ENCODE measurements at regions of chr9 and their contacts with region 1.

Region 1: DNA sequence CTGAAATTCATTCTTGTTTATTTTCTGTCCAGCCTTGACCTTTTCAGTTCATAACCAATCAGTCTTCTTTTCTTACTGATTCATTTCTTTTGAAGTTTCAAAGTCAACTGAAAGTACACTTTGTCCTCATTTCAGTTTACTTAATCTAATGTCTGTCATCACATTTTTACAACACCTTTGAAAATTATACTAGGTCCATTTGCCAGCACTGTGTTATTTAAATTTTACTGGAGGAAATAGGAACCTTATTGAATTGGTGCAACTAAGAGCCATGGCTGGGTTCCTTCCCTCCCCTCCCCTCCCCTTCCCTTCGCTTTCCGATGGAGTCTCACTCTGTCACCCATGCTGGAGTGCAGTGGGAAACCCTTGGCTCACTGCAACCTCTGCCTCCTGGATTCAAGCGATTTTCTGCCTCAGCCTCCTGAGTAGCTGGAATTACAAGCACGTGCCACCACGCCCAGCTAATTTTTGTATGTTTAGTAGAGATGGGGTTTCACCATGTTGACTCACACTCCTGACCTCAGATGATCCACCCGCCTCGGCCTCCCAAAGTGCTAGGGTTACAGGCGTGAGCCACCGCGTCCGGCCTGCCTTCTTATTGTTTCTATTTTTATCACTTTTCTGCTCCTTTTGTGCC is 6.3 kb downstream of the RMI1 start:
- DNase-seq: no peak
- ATAC-seq: peak in 5 of 8 donors; percentile 27 to 72 (median 42)
- H3K4me3 ChIP-seq: no peak overlapping the region
- H3K27ac ChIP-seq: no peak overlapping the region
- H3K4me1 ChIP-seq: peaks cover 0 to 32% (median 5%) of the 10 kb centered on the region in 9 donors
- H3K27me3 ChIP-seq: no peaks in the 10 kb centered on the region
- CTCF ChIP-seq: no peak

Region 2: GRCh38 chr9:84031534-84031933 is 44.7 kb after region 1 on chr9:
- intact Hi-C with region 1: no loop called
- DNase-seq: no peak
- ATAC-seq: no peak
- H3K4me3 ChIP-seq: no peak overlapping the region
- H3K27ac ChIP-seq: no peak overlapping the region
- H3K4me1 ChIP-seq: no peaks in the 10 kb centered on the region
- H3K27me3 ChIP-seq: no peaks in the 10 kb centered on the region
- CTCF ChIP-seq: no peak

Region 3: GRCh38 chr9:84146893-84147710 is 160.2 kb after region 1 on chr9:
- intact Hi-C with region 1: loop called in 2 of 10 experiments (anchors 5 to 10 kb)
- DNase-seq: no peak
- ATAC-seq: peak in 6 of 8 donors; percentile 39 to 75 (median 62)
- H3K4me3 ChIP-seq: no peak overlapping the region
- H3K27ac ChIP-seq: peak overlapping the region in 9 of 10 donors; percentile 32 to 76 (median 59)
- H3K4me1 ChIP-seq: peaks cover 2 to 31% (median 19%) of the 10 kb centered on the region in 9 donors
- H3K27me3 ChIP-seq: peaks cover 0 to 23% (median 16%) of the 10 kb centered on the region in 7 donors
- CTCF ChIP-seq: no peak